ENCODE measurements at regions of chr12 and their contacts with region 1.

Region 1: GRCh38 chr12:9331218-9331626 is 123.0 kb upstream of the PZP start:
- DNase-seq: peak; percentile 47 to 76 (median 52)
- H3K4me3 ChIP-seq: no peak overlapping the region
- H3K4me3 Mint-ChIP-seq: peak overlapping the region in 1 of 7 donors; percentile 28
- H3K27ac ChIP-seq: no peak overlapping the region
- H3K27ac Mint-ChIP-seq: peak overlapping the region in 3 of 8 donors; percentile 1 to 48 (median 6)
- H3K4me1 ChIP-seq: peaks cover 4% of the 10 kb centered on the region
- H3K4me1 Mint-ChIP-seq: peaks cover 17 to 23% (median 18%) of the 10 kb centered on the region in 3 donors
- H3K27me3 ChIP-seq: no peaks in the 10 kb centered on the region
- H3K27me3 Mint-ChIP-seq: no peaks in the 10 kb centered on the region

Region 2: DNA sequence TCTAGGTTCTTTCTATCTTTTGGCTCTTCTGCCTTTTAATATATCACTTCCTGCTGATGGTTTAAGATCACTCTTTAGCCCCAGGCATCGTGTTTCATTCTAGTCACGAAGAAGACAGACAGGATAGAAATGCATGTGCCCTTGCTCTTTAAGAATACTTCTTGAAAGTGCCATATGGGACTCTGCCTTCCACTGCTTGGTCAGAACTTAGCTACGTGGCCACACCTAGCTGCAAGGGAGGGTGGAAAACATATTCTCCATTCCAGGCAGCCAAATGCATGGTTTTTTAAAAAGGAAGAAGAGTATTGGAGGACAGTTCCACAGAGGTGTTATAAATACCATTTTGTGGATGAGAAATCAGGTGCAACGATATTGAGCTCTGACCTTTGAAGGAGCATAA is 133.2 kb after region 1 on chr12:
- CTCF ChIA-PET with region 1: interaction called, 10 read pairs
- POLR2A ChIA-PET with region 1: no interaction called
- DNase-seq: no peak
- H3K4me3 ChIP-seq: no peak overlapping the region
- H3K4me3 Mint-ChIP-seq: no peak overlapping the region
- H3K27ac ChIP-seq: no peak overlapping the region
- H3K27ac Mint-ChIP-seq: no peak overlapping the region
- H3K4me1 ChIP-seq: no peaks in the 10 kb centered on the region
- H3K4me1 Mint-ChIP-seq: peaks cover 3 to 14% (median 12%) of the 10 kb centered on the region in 3 donors
- H3K27me3 ChIP-seq: no peaks in the 10 kb centered on the region
- H3K27me3 Mint-ChIP-seq: no peaks in the 10 kb centered on the region